ENCODE measurements at regions of chr9 and their contacts with region 1.

Region 1: DNA sequence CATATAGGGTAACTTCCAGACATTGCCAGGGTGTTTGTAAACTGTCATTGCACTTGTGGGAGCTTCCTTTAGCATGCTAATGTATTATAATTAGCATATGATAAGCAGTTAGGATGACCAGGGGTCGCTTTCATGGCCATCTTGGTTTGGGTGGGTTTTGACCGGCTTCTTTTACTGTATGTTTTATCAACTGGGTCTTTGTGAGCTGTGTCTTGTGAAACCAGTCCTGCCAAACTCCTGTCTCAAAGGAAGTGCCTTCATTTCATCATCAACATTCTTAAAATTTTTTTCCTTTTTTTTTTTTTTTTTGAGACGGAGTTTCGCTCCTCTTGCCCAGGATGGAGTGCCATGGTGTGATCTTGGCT is 11.9 kb upstream of the MELK start:
- DNase-seq: no peak
- H3K4me3 ChIP-seq: no peak overlapping the region
- H3K4me1 ChIP-seq: peaks cover 11% of the 10 kb centered on the region
- H3K27me3 ChIP-seq: no peaks in the 10 kb centered on the region

Region 2: GRCh38 chr9:36400332-36401163 is 160.3 kb before region 1 on chr9:
- in situ Hi-C with region 1: loop called (anchors 5 kb)
- DNase-seq: peak; percentile 70 to 90
- H3K4me3 ChIP-seq: peak overlapping the region; percentile 73
- H3K4me1 ChIP-seq: peaks cover 17% of the 10 kb centered on the region
- H3K27me3 ChIP-seq: no peaks in the 10 kb centered on the region

Region 3: GRCh38 chr9:36461323-36461722 is 99.5 kb before region 1 on chr9:
- in situ Hi-C with region 1: no loop called
- DNase-seq: no peak
- H3K4me3 ChIP-seq: no peak overlapping the region
- H3K4me1 ChIP-seq: peaks cover 5% of the 10 kb centered on the region
- H3K27me3 ChIP-seq: no peaks in the 10 kb centered on the region; the same call in 1 of the 2 replicates

Region 4: DNA sequence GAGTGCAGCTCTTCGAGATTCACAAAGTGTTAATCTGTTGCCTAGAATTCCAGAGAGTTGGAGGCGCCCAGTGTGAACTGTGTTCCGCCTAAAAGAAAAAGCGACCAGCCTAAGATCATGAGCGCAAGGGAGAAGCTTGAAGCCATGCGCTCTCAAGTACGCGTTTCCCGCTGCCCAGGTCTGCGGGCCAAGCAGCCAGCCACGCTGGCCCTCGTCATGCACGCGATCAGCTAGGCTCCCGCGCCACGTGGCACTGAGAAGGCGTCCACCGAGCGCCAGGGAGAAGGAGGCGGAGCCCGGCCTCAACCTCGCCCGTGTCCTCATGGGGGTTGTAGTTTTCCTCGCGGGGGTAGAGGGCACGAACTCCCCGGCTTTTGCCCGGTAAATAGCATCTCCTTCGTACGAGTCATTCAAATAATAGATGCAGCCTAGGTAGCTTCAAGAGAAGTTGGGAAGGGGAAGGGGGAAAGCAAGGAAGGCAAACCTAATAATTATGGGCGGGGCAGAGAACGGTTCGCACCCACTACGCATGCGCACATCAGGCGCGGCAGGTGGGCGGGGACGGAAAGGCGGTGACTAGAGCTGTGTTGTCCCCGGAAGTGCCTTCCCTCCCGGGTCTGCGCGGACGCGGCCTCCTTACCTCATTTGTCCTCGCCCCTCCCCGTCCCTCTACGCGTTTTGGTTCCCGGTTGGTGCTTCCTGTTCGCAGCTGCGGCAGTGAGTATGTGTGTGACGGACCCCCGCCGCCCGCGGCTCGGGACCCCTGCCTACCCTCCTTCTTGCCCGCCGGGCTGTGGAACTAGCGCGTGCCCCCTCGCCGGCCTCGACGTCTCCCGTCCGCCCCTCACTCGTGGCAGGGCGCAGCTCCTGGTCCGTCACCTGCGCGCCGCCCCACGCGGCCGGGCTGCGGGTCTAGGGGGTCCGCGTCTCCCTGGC is 559.3 kb after region 1 on chr9 and contains the start of gene ZCCHC7:
- in situ Hi-C with region 1: no loop called
- DNase-seq: peak; percentile 88 to 97
- H3K4me3 ChIP-seq: peak within 1 kb of the TSS; percentile 81
- H3K4me1 ChIP-seq: peaks cover 10% of the 10 kb centered on the region
- H3K27me3 ChIP-seq: no peaks in the 10 kb centered on the region